Heart right ventricle (tissue), 16 donors: ENCODE measurements at regions of chr20 and their contacts with region 1.

Region 1: GRCh38 chr20:17688965-17689364 is 6.9 kb upstream of the RRBP1 start:
- DNase-seq: no peak
- ATAC-seq: no peak
- H3K4me3 ChIP-seq: no peak overlapping the region
- H3K27ac ChIP-seq: no peak overlapping the region
- H3K4me1 ChIP-seq: no peaks in the 10 kb centered on the region
- H3K27me3 ChIP-seq: peaks cover 0 to 5% (median 0%) of the 10 kb centered on the region in 7 donors
- CTCF ChIP-seq: no peak

Region 2: GRCh38 chr20:17749975-17750721 is 61.2 kb after region 1 on chr20:
- intact Hi-C with region 1: loop called in 2 of 10 experiments (anchors 5 to 10 kb)
- DNase-seq: peak; percentile 74 to 83
- ATAC-seq: peak; percentile 91 to 97 (median 96)
- H3K4me3 ChIP-seq: no peak overlapping the region
- H3K27ac ChIP-seq: peak overlapping the region in 6 of 10 donors; percentile 45 to 70 (median 59)
- H3K4me1 ChIP-seq: peaks cover 0 to 24% (median 16%) of the 10 kb centered on the region in 9 donors
- H3K27me3 ChIP-seq: peaks cover 0 to 4% (median 0%) of the 10 kb centered on the region in 7 donors
- CTCF ChIP-seq: no peak